Naive thymus-derived CD4-positive, alpha-beta T cell (primary cell): ENCODE measurements at regions of chr9 and their contacts with region 1.

Region 1: DNA sequence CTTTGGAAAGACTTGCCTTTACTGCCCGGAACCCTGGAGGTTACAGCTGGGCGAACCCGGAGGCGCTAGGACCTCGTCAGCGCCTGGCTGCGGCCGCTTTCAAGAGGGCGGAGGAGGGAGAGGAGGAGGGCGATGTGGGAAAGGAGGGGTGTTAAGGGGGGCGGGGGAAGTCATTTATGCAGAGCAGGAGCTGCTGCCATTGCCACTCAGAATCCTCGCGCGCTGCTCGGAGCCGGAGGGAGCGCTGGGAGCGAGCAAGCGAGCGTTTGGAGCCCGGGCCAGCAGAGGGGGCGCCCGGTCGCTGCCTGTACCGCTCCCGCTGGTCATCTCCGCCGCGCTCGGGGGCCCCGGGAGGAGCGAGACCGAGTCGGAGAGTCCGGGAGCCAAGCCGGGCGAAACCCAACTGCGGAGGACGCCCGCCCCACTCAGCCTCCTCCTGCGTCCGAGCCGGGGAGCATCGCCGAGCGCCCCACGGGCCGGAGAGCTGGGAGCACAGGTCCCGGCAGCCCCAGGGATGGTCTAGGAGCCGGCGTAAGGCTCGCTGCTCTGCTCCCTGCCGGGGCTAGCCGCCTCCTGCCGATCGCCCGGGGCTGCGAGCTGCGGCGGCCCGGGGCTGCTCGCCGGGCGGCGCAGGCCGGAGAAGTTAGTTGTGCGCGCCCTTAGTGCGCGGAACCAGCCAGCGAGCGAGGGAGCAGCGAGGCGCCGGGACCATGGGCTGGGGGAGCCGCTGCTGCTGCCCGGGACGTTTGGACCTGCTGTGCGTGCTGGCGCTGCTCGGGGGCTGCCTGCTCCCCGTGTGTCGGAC is at the start of gene PCSK5:
- DNase-seq: peak; percentile 65 to 94 (median 90)
- ATAC-seq: peak; percentile 95
- H3K4me3 ChIP-seq: peak within 1 kb of the TSS; percentile 70
- H3K4me3 Mint-ChIP-seq: peak within 1 kb of the TSS; percentile 91 to 99 (median 97)
- H3K27ac ChIP-seq: peak within 1 kb of the TSS; percentile 77
- H3K27ac Mint-ChIP-seq: peak within 1 kb of the TSS; percentile 81 to 95 (median 90)
- H3K4me1 ChIP-seq: peaks cover 0 to 15% of the 10 kb centered on the region in 2 donors
- H3K4me1 Mint-ChIP-seq: peaks cover 35 to 59% (median 49%) of the 10 kb centered on the region in 7 donors
- H3K27me3 ChIP-seq: no peaks in the 10 kb centered on the region
- H3K27me3 Mint-ChIP-seq: peaks cover 0 to 50% (median 0%) of the 10 kb centered on the region in 5 donors
- total RNA-seq, gene PCSK5: 5.2 to 35.0 (median 24.6) TPM

Region 2: GRCh38 chr9:75088260-75088905 is 802.3 kb before region 1 on chr9 and contains the start of gene OSTF1:
- CTCF ChIA-PET with region 1: no interaction called
- POLR2A ChIA-PET with region 1: no interaction called
- intact Hi-C with region 1: loop called (anchors 1 to 5 kb)
- DNase-seq: peak; percentile 89 to 95 (median 95)
- ATAC-seq: peak; percentile 93
- H3K4me3 ChIP-seq: peak within 1 kb of the TSS; percentile 76
- H3K4me3 Mint-ChIP-seq: peak within 1 kb of the TSS; percentile 89 to 100 (median 99)
- H3K27ac ChIP-seq: peak within 1 kb of the TSS; percentile 92
- H3K27ac Mint-ChIP-seq: peak within 1 kb of the TSS; percentile 91 to 98 (median 94)
- H3K4me1 ChIP-seq: peaks cover 29 to 49% of the 10 kb centered on the region in 2 donors
- H3K4me1 Mint-ChIP-seq: peaks cover 58 to 82% (median 78%) of the 10 kb centered on the region in 7 donors
- H3K27me3 ChIP-seq: no peaks in the 10 kb centered on the region
- H3K27me3 Mint-ChIP-seq: no peaks in the 10 kb centered on the region
- total RNA-seq, gene OSTF1: 38.7 to 93.5 (median 46.2) TPM

Region 3: DNA sequence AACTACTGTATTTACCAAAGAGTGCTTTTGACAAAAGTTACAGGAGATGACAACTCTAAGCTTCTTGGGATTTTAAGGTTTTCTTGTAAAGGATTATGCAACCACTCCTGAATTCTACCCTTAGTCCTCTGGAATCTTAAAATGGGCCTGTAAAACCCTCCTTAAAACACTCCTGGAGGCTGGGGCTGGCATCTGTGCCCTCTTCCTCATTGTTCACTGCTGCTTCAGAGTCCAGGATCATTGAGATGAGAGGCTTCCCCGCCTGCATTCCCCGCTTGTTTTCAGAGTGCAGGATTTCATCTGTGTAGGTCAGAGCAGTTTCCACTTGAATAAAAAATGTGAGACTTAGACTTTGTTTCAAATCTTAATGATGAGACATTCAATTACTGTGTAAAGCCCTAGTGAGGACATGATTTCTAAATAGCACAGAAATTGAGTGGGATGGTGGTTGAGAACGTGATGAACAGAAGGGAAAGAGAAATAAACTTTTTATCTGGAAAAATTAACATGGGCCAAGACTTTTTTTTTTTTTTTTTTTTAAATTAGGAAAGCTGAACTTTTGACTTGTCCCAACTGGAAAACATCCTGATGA is 40.2 kb after region 1 on chr9:
- CTCF ChIA-PET with region 1: interaction called, 3 read pairs
- POLR2A ChIA-PET with region 1: no interaction called
- intact Hi-C with region 1: loop called in 1 of 2 experiments (anchors 5 kb)
- DNase-seq: no peak
- ATAC-seq: no peak
- H3K4me3 ChIP-seq: no peak overlapping the region
- H3K4me3 Mint-ChIP-seq: no peak overlapping the region
- H3K27ac ChIP-seq: no peak overlapping the region
- H3K27ac Mint-ChIP-seq: peak overlapping the region in 4 of 9 donors; percentile 2 to 14 (median 6)
- H3K4me1 ChIP-seq: no peaks in the 10 kb centered on the region
- H3K4me1 Mint-ChIP-seq: peaks cover 0 to 62% (median 47%) of the 10 kb centered on the region in 7 donors
- H3K27me3 ChIP-seq: no peaks in the 10 kb centered on the region
- H3K27me3 Mint-ChIP-seq: no peaks in the 10 kb centered on the region

Region 4: GRCh38 chr9:76090330-76090729 is 199.7 kb after region 1 on chr9:
- CTCF ChIA-PET with region 1: no interaction called
- POLR2A ChIA-PET with region 1: no interaction called
- intact Hi-C with region 1: loop called in 1 of 2 experiments (anchors 2 kb)
- DNase-seq: no peak
- ATAC-seq: no peak
- H3K4me3 ChIP-seq: no peak overlapping the region
- H3K4me3 Mint-ChIP-seq: no peak overlapping the region
- H3K27ac ChIP-seq: no peak overlapping the region
- H3K27ac Mint-ChIP-seq: peak overlapping the region in 3 of 9 donors; percentile 2 to 83 (median 7)
- H3K4me1 ChIP-seq: no peaks in the 10 kb centered on the region
- H3K4me1 Mint-ChIP-seq: peaks cover 0 to 23% (median 9%) of the 10 kb centered on the region in 7 donors
- H3K27me3 ChIP-seq: no peaks in the 10 kb centered on the region
- H3K27me3 Mint-ChIP-seq: no peaks in the 10 kb centered on the region

Region 5: DNA sequence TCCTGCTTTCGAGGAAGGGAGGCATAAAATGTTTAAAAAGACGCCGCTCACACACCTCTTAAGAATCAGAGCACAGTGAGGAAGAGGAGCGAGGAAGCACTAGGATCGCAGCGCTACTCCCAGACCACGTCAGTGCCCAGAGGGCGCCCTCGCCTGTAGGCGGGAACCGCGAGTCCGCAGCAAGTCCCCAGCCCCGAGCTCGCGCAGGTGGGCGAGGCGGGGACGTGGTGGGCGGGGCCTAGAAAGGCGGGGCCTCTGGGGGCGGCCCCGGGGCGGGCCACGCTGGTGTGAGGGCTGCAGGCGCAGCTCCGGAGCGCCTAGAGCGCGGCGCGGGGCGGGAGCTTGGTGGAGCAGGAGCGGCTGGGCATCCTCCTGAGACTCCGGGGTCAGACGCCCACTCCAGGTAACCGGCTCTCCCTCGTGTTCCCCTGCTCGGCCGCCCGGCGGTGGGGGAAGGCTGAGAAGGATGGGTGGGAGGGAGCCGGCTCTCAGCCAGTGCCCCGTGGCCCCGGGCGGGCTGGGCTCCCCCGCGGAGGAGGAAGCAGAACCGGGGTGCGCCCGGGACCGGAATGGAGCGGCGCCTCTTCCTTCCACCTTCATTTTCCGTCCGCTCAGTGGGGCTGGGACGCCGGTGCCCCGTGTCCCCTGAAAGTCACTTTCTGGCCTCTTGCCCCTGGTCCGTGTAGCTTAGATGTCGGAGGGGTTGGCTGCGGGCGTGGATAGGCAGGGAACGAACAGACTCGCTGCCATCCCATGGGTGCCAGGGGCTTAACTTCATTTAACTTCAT is 568.4 kb after region 1 on chr9 and contains the start of gene GCNT1:
- CTCF ChIA-PET with region 1: no interaction called
- POLR2A ChIA-PET with region 1: no interaction called
- intact Hi-C with region 1: loop called (anchors 1 to 5 kb)
- DNase-seq: peak; percentile 78 to 98 (median 86)
- ATAC-seq: peak; percentile 98
- H3K4me3 ChIP-seq: peak within 1 kb of the TSS; percentile 92
- H3K4me3 Mint-ChIP-seq: peak within 1 kb of the TSS; percentile 81 to 96 (median 92)
- H3K27ac ChIP-seq: no peak within 1 kb of the TSS
- H3K27ac Mint-ChIP-seq: peak within 1 kb of the TSS in 8 of 9 donors; percentile 7 to 81 (median 61)
- H3K4me1 ChIP-seq: peaks cover 3 to 11% of the 10 kb centered on the region in 2 donors
- H3K4me1 Mint-ChIP-seq: peaks cover 16 to 34% (median 20%) of the 10 kb centered on the region in 7 donors
- H3K27me3 ChIP-seq: no peaks in the 10 kb centered on the region
- H3K27me3 Mint-ChIP-seq: peaks cover 0 to 3% (median 0%) of the 10 kb centered on the region in 5 donors
- total RNA-seq, gene GCNT1: 1.4 to 8.9 (median 1.7) TPM